ENCODE measurements at regions of chr1 and their contacts with region 1.

Region 1: GRCh38 chr1:201792534-201793305 is 36.2 kb upstream of the IPO9 start:
- DNase-seq: peak in 3 of 4 donors; percentile 61 to 82 (median 68)
- ATAC-seq: peak; percentile 96
- H3K4me3 ChIP-seq: no peak overlapping the region
- H3K27ac ChIP-seq: peak overlapping the region; percentile 58 to 80
- H3K4me1 ChIP-seq: peaks cover 31 to 33% of the 10 kb centered on the region in 2 donors
- H3K27me3 ChIP-seq: no peaks in the 10 kb centered on the region
- CTCF ChIP-seq: peak; percentile 91 to 94

Region 2: GRCh38 chr1:201408176-201408833 is 384.4 kb before region 1 on chr1:
- intact Hi-C with region 1: no loop called
- DNase-seq: peak; percentile 51 to 87 (median 74)
- ATAC-seq: peak; percentile 87
- H3K4me3 ChIP-seq: no peak overlapping the region
- H3K27ac ChIP-seq: no peak overlapping the region
- H3K4me1 ChIP-seq: peaks cover 0 to 14% of the 10 kb centered on the region in 2 donors
- H3K27me3 ChIP-seq: no peaks in the 10 kb centered on the region
- CTCF ChIP-seq: peak; percentile 93 to 95

Region 3: GRCh38 chr1:201559679-201560162 is 233.0 kb before region 1 on chr1:
- intact Hi-C with region 1: loop called in 1 of 2 experiments (anchors 5 kb)
- DNase-seq: peak; percentile 76 to 93 (median 86)
- ATAC-seq: peak; percentile 99
- H3K4me3 ChIP-seq: no peak overlapping the region
- H3K27ac ChIP-seq: no peak overlapping the region
- H3K4me1 ChIP-seq: peaks cover 0 to 57% of the 10 kb centered on the region in 2 donors
- H3K27me3 ChIP-seq: no peaks in the 10 kb centered on the region
- CTCF ChIP-seq: peak; percentile 90 to 96

Region 4: GRCh38 chr1:201602413-201603265 is 190.1 kb before region 1 on chr1:
- intact Hi-C with region 1: no loop called
- DNase-seq: no peak
- ATAC-seq: peak; percentile 27
- H3K4me3 ChIP-seq: no peak overlapping the region
- H3K27ac ChIP-seq: no peak overlapping the region
- H3K4me1 ChIP-seq: peaks cover 0 to 25% of the 10 kb centered on the region in 2 donors
- H3K27me3 ChIP-seq: no peaks in the 10 kb centered on the region
- CTCF ChIP-seq: no peak

Region 5: GRCh38 chr1:201709564-201710295 is 83.0 kb before region 1 on chr1:
- intact Hi-C with region 1: loop called (anchors 2 to 10 kb)
- DNase-seq: peak in 3 of 4 donors; percentile 66 to 90 (median 71)
- ATAC-seq: peak; percentile 77
- H3K4me3 ChIP-seq: no peak overlapping the region
- H3K27ac ChIP-seq: no peak overlapping the region
- H3K4me1 ChIP-seq: peaks cover 29 to 49% of the 10 kb centered on the region in 2 donors
- H3K27me3 ChIP-seq: no peaks in the 10 kb centered on the region
- CTCF ChIP-seq: peak; percentile 89 to 95

Region 6: GRCh38 chr1:201724766-201725118 is 68.0 kb before region 1 on chr1:
- intact Hi-C with region 1: no loop called
- DNase-seq: peak in 2 of 4 donors; percentile 63 to 85
- ATAC-seq: peak; percentile 34
- H3K4me3 ChIP-seq: no peak overlapping the region
- H3K27ac ChIP-seq: peak overlapping the region; percentile 37 to 79
- H3K4me1 ChIP-seq: peaks cover 9 to 15% of the 10 kb centered on the region in 2 donors
- H3K27me3 ChIP-seq: no peaks in the 10 kb centered on the region
- CTCF ChIP-seq: no peak

Measured in left lung (tissue), 14 donors.